ENCODE measurements at regions of chr9 and their contacts with region 1.

Region 1: GRCh38 chr9:79673614-79674013 is 101.8 kb downstream of the TLE4 start:
- DNase-seq: no peak
- H3K4me3 ChIP-seq: no peak overlapping the region
- H3K27ac ChIP-seq: no peak overlapping the region
- H3K4me1 ChIP-seq: no peaks in the 10 kb centered on the region
- CTCF ChIP-seq: no peak

Region 2: GRCh38 chr9:79637177-79637925 is 36.3 kb before region 1 on chr9:
- CTCF ChIA-PET with region 1: no interaction called
- POLR2A ChIA-PET with region 1: no interaction called
- intact Hi-C with region 1: loop called (anchors 5 kb)
- DNase-seq: no peak
- H3K4me3 ChIP-seq: no peak overlapping the region
- H3K27ac ChIP-seq: no peak overlapping the region
- H3K4me1 ChIP-seq: no peaks in the 10 kb centered on the region
- CTCF ChIP-seq: no peak

Measured in OCI-LY7 (cell line).